ENCODE measurements at regions of chr5 and their contacts with region 1.

Region 1: GRCh38 chr5:14685757-14686156 is 21.2 kb downstream of the OTULIN start:
- DNase-seq: peak; percentile 39 to 54
- H3K4me3 ChIP-seq: no peak overlapping the region
- H3K27ac ChIP-seq: no peak overlapping the region
- H3K4me1 ChIP-seq: no peaks in the 10 kb centered on the region
- H3K27me3 ChIP-seq: no peaks in the 10 kb centered on the region
- CTCF ChIP-seq: peak; percentile 85

Region 2: GRCh38 chr5:14399054-14399692 is 286.6 kb before region 1 on chr5:
- CTCF ChIA-PET with region 1: no interaction called
- POLR2A ChIA-PET with region 1: no interaction called
- intact Hi-C with region 1: no loop called
- DNase-seq: peak in 1 of 2 experiments; percentile 46
- H3K4me3 ChIP-seq: no peak overlapping the region
- H3K27ac ChIP-seq: no peak overlapping the region
- H3K4me1 ChIP-seq: peaks cover 10% of the 10 kb centered on the region; the same call in 1 of the 2 replicates
- H3K27me3 ChIP-seq: no peaks in the 10 kb centered on the region
- CTCF ChIP-seq: peak; percentile 83

Region 3: DNA sequence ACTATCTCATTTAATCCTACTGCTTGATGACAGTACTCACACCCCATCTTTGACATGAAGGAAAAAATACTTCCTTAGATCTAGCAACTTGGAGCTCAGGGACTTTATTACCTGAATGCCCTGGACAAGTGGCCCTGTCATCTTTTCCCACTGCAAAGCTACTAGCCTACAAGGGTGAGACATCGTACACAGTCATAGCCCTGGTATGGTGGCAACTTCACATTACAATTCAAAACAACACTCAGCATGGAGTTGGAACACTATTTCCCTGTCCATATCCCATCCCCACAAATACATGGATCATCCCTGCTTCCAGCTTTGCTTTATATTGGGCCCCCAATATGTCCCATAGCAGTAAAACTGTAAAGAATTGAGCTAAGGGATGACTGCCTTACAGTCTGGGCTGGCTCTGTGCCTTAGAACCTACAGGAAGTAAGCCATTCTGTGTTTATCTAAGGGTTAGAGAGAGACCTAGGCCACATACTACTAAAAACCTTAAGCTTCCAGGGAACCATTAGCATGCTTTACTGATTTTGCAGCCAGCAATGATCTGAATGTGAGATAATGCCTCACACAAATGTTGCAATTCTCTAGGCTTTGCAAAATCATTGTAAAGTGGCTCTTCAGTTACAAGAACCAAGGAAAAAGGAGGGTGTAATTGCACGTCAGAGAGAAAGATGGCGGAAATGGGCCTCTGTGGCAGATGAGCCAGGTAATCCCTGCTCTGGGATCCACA is 34.6 kb after region 1 on chr5:
- CTCF ChIA-PET with region 1: interaction called, 13 read pairs
- POLR2A ChIA-PET with region 1: no interaction called
- intact Hi-C with region 1: no loop called
- DNase-seq: peak; percentile 20 to 41
- H3K4me3 ChIP-seq: no peak overlapping the region
- H3K27ac ChIP-seq: no peak overlapping the region
- H3K4me1 ChIP-seq: no peaks in the 10 kb centered on the region
- H3K27me3 ChIP-seq: no peaks in the 10 kb centered on the region
- CTCF ChIP-seq: no peak

Region 4: GRCh38 chr5:14880688-14881087 is 194.9 kb after region 1 on chr5:
- CTCF ChIA-PET with region 1: no interaction called
- POLR2A ChIA-PET with region 1: no interaction called
- intact Hi-C with region 1: no loop called
- DNase-seq: no peak
- H3K4me3 ChIP-seq: no peak overlapping the region
- H3K27ac ChIP-seq: no peak overlapping the region
- H3K4me1 ChIP-seq: no peaks in the 10 kb centered on the region
- H3K27me3 ChIP-seq: no peaks in the 10 kb centered on the region
- CTCF ChIP-seq: no peak

Region 5: GRCh38 chr5:14946815-14947640 is 261.3 kb after region 1 on chr5:
- CTCF ChIA-PET with region 1: no interaction called
- POLR2A ChIA-PET with region 1: no interaction called
- intact Hi-C with region 1: loop called (anchors 5 kb)
- DNase-seq: peak in 1 of 2 experiments; percentile 24
- H3K4me3 ChIP-seq: no peak overlapping the region
- H3K27ac ChIP-seq: no peak overlapping the region
- H3K4me1 ChIP-seq: no peaks in the 10 kb centered on the region
- H3K27me3 ChIP-seq: peaks cover 16% of the 10 kb centered on the region; the same call in 1 of the 2 replicates
- CTCF ChIP-seq: peak; percentile 49

Region 6: GRCh38 chr5:15013654-15014463 is 328.1 kb after region 1 on chr5:
- CTCF ChIA-PET with region 1: interaction called, 14 read pairs
- POLR2A ChIA-PET with region 1: interaction called, 3 read pairs
- intact Hi-C with region 1: loop called (anchors 1 kb)
- DNase-seq: peak in 1 of 2 experiments; percentile 30
- H3K4me3 ChIP-seq: no peak overlapping the region
- H3K27ac ChIP-seq: no peak overlapping the region
- H3K4me1 ChIP-seq: peaks cover 14% of the 10 kb centered on the region
- H3K27me3 ChIP-seq: no peaks in the 10 kb centered on the region
- CTCF ChIP-seq: peak; percentile 84